ENCODE measurements at regions of chr6 and their contacts with region 1.

Region 1: GRCh38 chr6:36851149-36851614 is 11.9 kb upstream of the CPNE5 start:
- DNase-seq: peak; percentile 81
- H3K4me3 ChIP-seq: no peak overlapping the region
- H3K27ac ChIP-seq: no peak overlapping the region
- H3K4me1 ChIP-seq: peaks cover 30% of the 10 kb centered on the region
- H3K27me3 ChIP-seq: no peaks in the 10 kb centered on the region
- CTCF ChIP-seq: peak; percentile 70 to 85
- POLR2A ChIP-seq: no peak

Region 2: GRCh38 chr6:36615018-36615761 is 236.0 kb before region 1 on chr6:
- CTCF ChIA-PET with region 1: interaction called, 15 read pairs
- POLR2A ChIA-PET with region 1: no interaction called
- dilution Hi-C with region 1: no loop called
- intact Hi-C with region 1: loop called (anchors 10 kb)
- DNase-seq: peak; percentile 85
- H3K4me3 ChIP-seq: no peak overlapping the region
- H3K27ac ChIP-seq: no peak overlapping the region
- H3K4me1 ChIP-seq: peaks cover 17% of the 10 kb centered on the region
- H3K27me3 ChIP-seq: no peaks in the 10 kb centered on the region
- CTCF ChIP-seq: peak; percentile 65 to 74
- POLR2A ChIP-seq: no peak

Region 3: GRCh38 chr6:36765594-36766398 is 85.4 kb before region 1 on chr6:
- CTCF ChIA-PET with region 1: interaction called, 552 read pairs
- POLR2A ChIA-PET with region 1: interaction called, 4 read pairs
- dilution Hi-C with region 1: no loop called
- intact Hi-C with region 1: loop called (anchors 1 kb)
- DNase-seq: peak; percentile 65
- H3K4me3 ChIP-seq: no peak overlapping the region
- H3K27ac ChIP-seq: no peak overlapping the region
- H3K4me1 ChIP-seq: peaks cover 15% of the 10 kb centered on the region
- H3K27me3 ChIP-seq: no peaks in the 10 kb centered on the region
- CTCF ChIP-seq: peak; percentile 90 to 96
- POLR2A ChIP-seq: no peak

Region 4: DNA sequence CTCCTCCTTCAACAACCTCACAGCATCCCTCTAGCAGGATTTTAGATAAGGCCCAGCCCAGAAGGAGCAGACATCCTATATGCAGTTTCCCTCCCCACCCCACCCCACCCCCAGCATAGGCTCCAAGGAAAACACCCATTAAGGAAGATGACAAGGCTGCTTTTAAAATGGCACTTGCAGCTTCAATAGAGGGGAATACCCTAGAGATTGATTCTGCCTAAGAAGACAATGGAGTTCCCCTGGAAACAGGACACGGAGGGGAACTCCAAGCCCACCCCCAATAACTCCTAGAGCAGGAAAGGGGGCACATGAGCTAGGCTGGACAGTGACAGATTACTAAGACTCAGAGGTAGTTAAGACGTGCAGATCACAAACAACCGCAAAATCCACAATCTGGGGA is 46.6 kb before region 1 on chr6:
- CTCF ChIA-PET with region 1: interaction called, 95 read pairs
- POLR2A ChIA-PET with region 1: no interaction called
- dilution Hi-C with region 1: no loop called
- intact Hi-C with region 1: no loop called
- DNase-seq: no peak
- H3K4me3 ChIP-seq: no peak overlapping the region
- H3K27ac ChIP-seq: no peak overlapping the region
- H3K4me1 ChIP-seq: peaks cover 5% of the 10 kb centered on the region
- H3K27me3 ChIP-seq: no peaks in the 10 kb centered on the region
- CTCF ChIP-seq: no peak
- POLR2A ChIP-seq: no peak

Region 5: GRCh38 chr6:36827261-36828079 is 23.7 kb before region 1 on chr6:
- CTCF ChIA-PET with region 1: interaction called, 41 read pairs
- POLR2A ChIA-PET with region 1: interaction called, 4 read pairs
- dilution Hi-C with region 1: no loop called
- intact Hi-C with region 1: loop called (anchors 1 kb)
- DNase-seq: peak; percentile 99
- H3K4me3 ChIP-seq: peak overlapping the region in 1 of 3 experiments; percentile 13
- H3K27ac ChIP-seq: peak overlapping the region; percentile 100
- H3K4me1 ChIP-seq: peaks cover 72% of the 10 kb centered on the region
- H3K27me3 ChIP-seq: no peaks in the 10 kb centered on the region
- CTCF ChIP-seq: no peak
- POLR2A ChIP-seq: peak; percentile 59

Region 6: GRCh38 chr6:36874443-36875249 is 23.5 kb after region 1 on chr6 and contains the start of gene PPIL1:
- CTCF ChIA-PET with region 1: interaction called, 41 read pairs
- POLR2A ChIA-PET with region 1: no interaction called
- dilution Hi-C with region 1: no loop called
- intact Hi-C with region 1: no loop called
- DNase-seq: peak; percentile 93
- H3K4me3 ChIP-seq: peak within 1 kb of the TSS; percentile 63 to 95 (median 67)
- H3K27ac ChIP-seq: peak within 1 kb of the TSS; percentile 82
- H3K4me1 ChIP-seq: peaks cover 12% of the 10 kb centered on the region
- H3K27me3 ChIP-seq: no peaks in the 10 kb centered on the region
- CTCF ChIP-seq: peak in 1 of 2 donors; percentile 2
- POLR2A ChIP-seq: peak; percentile 59
- total RNA-seq, gene PPIL1: 33.8 and 35.6 TPM in 2 replicates